ENCODE measurements at regions of chr4 and their contacts with region 1.

Region 1: DNA sequence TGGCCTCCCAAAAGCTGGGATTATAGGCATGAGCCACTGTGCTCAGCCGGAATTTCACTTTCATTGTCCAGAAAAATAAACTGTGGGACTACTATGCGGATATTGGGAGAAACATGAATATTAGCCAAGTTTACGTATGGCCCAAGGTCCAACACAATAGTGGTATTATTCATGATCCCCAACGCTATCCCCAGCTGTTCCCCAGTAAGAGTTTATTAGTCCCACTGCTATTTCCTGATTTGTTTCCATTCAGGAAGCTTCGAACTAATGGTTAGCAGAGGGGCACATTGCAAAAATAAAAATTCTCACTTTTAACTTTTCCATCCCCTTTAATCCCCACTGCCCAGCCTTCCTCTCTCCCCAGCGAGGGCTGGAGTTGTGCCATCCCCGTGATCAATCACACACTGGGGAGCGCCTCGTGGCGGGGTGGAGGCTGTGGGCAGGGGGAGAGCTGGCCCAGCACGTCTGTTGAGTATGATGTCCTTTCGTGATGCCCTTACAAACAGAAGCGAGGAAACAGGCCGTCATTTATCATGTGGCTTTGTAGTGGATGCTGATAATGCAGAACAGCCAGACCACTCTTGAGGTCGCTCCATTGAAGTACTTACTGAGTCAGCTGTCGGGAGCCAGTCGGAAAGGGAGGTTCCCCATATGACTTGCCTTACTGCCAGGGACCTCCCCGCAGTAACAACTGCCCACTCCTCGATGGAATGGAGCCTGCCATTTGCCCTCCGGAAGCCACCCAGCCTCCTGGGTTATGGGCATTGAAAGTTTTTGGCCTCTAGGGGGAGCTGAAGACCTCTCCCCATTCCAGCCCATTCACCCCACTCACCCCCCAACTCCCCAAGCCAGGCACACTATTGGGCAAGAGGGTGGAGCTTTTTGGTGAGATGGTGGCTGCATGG is 117.0 kb downstream of the KDR start:
- DNase-seq: peak; percentile 94
- H3K4me3 ChIP-seq: no peak overlapping the region
- H3K27ac ChIP-seq: peak overlapping the region; percentile 21
- H3K4me1 ChIP-seq: peaks cover 11% of the 10 kb centered on the region
- H3K27me3 ChIP-seq: no peaks in the 10 kb centered on the region
- CTCF ChIP-seq: peak; percentile 41 to 57
- POLR2A ChIP-seq: no peak

Region 2: DNA sequence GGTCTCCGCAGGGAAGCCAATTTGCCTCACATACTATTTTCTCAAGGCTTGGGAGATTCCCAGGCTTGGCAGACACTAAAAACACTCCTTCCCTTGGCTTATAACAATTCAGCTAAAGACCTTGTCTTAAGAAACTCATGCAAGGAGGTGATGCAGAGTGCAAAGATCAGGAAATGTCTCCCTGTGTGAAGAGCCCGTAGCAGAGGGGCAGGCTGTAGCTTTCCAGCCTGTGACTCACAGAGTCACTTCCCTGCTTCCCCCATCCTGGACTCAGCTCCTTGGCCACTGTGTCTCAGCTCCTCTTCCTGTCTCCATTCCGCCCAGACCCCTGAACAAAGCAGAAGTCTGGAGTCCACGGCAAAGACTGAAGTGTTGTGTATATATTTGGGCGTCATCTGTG is 60.8 kb after region 1 on chr4:
- CTCF ChIA-PET with region 1: interaction called, 17 read pairs
- POLR2A ChIA-PET with region 1: interaction called, 3 read pairs
- dilution Hi-C with region 1: no loop called
- intact Hi-C with region 1: loop called (anchors 1 kb)
- DNase-seq: peak; percentile 95
- H3K4me3 ChIP-seq: peak overlapping the region in 1 of 3 experiments; percentile 2
- H3K27ac ChIP-seq: peak overlapping the region; percentile 98
- H3K4me1 ChIP-seq: peaks cover 26% of the 10 kb centered on the region
- H3K27me3 ChIP-seq: no peaks in the 10 kb centered on the region
- CTCF ChIP-seq: no peak
- POLR2A ChIP-seq: peak; percentile 60